Mammary epithelial cell (primary cell): ENCODE measurements at regions of chr13 and their contacts with region 1.

Region 1: GRCh38 chr13:67143544-67144115 is 86.5 kb downstream of the PCDH9 start:
- DNase-seq: no peak
- H3K4me3 ChIP-seq: no peak overlapping the region
- H3K27ac ChIP-seq: no peak overlapping the region
- H3K4me1 ChIP-seq: peaks cover 8% of the 10 kb centered on the region
- H3K27me3 ChIP-seq: no peaks in the 10 kb centered on the region
- CTCF ChIP-seq: no peak

Region 2: GRCh38 chr13:67125681-67126080 is 17.9 kb before region 1 on chr13:
- CTCF ChIA-PET with region 1: no interaction called
- dilution Hi-C with region 1: no loop called
- in situ Hi-C with region 1: no loop called
- intact Hi-C with region 1: loop called (anchors 2 kb)
- DNase-seq: no peak
- H3K4me3 ChIP-seq: no peak overlapping the region
- H3K27ac ChIP-seq: no peak overlapping the region
- H3K4me1 ChIP-seq: peaks cover 12% of the 10 kb centered on the region
- H3K27me3 ChIP-seq: no peaks in the 10 kb centered on the region
- CTCF ChIP-seq: no peak

Region 3: GRCh38 chr13:67204764-67205163 is 61.1 kb after region 1 on chr13:
- CTCF ChIA-PET with region 1: no interaction called
- dilution Hi-C with region 1: no loop called
- in situ Hi-C with region 1: no loop called
- intact Hi-C with region 1: no loop called
- DNase-seq: no peak
- H3K4me3 ChIP-seq: no peak overlapping the region
- H3K27ac ChIP-seq: no peak overlapping the region
- H3K4me1 ChIP-seq: no peaks in the 10 kb centered on the region
- H3K27me3 ChIP-seq: peaks cover 3% of the 10 kb centered on the region
- CTCF ChIP-seq: no peak